Left ventricle myocardium superior (tissue), 1 donor: ENCODE measurements at regions of chr18 and their contacts with region 1.

Region 1: GRCh38 chr18:49858309-49859020 is 45.1 kb upstream of the ACAA2 start:
- DNase-seq: peak; percentile 62
- ATAC-seq: peak; percentile 75

Region 2: GRCh38 chr18:49510393-49511115 is 347.9 kb before region 1 on chr18:
- intact Hi-C with region 1: loop called (anchors 5 kb)
- DNase-seq: peak; percentile 40
- ATAC-seq: peak; percentile 66